ENCODE measurements at regions of chr11 and their contacts with region 1.

Region 1: DNA sequence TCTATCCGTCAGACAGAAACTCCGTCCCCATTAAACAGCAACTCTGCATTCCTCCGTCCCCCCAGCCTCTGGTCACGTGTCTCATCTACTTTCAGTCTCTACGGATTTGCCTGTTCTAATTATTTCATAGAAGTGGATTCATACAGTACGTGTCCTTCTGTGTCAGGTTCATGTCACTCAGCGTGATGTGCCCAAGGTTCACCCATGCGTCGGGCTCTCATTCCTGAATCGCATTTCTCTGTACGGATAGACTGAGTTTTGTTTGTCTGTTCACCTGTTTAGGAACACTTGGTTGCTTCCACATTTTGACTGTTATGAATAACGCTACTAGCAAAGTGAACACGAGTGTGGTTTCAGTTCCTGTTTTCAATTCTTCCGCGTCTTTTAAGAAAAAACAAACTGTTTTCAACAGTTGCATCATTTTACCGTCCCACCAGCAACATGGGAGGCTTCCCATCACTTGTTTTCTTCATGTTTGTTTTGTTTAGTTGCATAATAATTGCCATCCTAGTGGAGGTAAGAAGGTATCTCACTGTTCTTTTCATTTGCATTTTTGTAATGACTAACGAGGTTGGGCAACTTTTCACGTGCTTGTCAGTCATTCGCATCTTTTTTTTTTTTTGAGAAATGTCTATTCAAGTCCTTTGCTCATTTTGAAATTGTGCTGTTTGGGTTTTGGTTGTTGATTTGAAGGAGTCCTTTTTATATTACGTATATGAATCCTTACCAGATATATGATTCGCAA is 8.9 kb upstream of the NLRP6 start:
- DNase-seq: peak; percentile 81
- H3K4me3 Mint-ChIP-seq: peak overlapping the region; percentile 86
- H3K27ac Mint-ChIP-seq: peak overlapping the region; percentile 96
- H3K4me1 Mint-ChIP-seq: peaks cover 36% of the 10 kb centered on the region
- H3K27me3 Mint-ChIP-seq: no peaks in the 10 kb centered on the region

Region 2: GRCh38 chr11:207208-207862 is 62.0 kb before region 1 on chr11 and contains the starts of genes BET1L and RIC8A:
- CTCF ChIA-PET with region 1: interaction called, 4 read pairs
- POLR2A ChIA-PET with region 1: interaction called, 5 read pairs
- intact Hi-C with region 1: loop called (anchors 1 kb)
- DNase-seq: peak; percentile 98
- H3K4me3 Mint-ChIP-seq: peak within 1 kb of the TSS; percentile 97
- H3K27ac Mint-ChIP-seq: peak within 1 kb of the TSS; percentile 99
- H3K4me1 Mint-ChIP-seq: peaks cover 55% of the 10 kb centered on the region
- H3K27me3 Mint-ChIP-seq: no peaks in the 10 kb centered on the region
- total RNA-seq, gene BET1L: 51.0 to 53.2 TPM
- total RNA-seq, gene RIC8A: 100 to 104 TPM

Region 3: DNA sequence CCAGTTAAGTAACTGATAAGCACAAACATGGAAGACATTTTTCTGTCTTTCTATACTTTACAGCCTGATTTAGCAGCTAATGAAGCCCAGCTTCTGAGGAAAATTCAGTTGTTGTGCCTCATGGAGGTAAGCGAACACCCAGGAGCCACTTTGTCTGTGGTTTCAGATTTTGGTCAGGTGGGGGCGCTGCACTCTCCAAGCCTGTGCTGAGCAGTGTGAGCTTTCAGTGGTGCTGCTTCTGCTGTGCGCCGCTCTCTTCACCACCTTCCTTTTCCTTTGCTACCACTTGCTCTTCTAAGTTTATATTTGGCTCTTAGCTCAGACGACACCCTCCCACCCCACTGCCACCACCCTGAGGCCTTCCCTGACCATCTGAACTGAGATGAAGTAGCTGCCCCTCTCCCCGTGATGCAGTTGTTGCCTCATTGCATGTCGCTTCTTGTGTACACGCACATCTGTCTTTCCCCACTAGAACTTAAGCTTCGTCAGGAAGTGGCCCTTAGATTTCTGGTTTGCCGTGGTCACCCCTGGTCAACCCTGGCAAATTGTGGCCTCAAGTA is 18.5 kb before region 1 on chr11:
- CTCF ChIA-PET with region 1: interaction called, 24 read pairs
- POLR2A ChIA-PET with region 1: interaction called, 3 read pairs
- intact Hi-C with region 1: no loop called
- DNase-seq: peak; percentile 89
- H3K4me3 Mint-ChIP-seq: no peak overlapping the region
- H3K27ac Mint-ChIP-seq: peak overlapping the region; percentile 64
- H3K4me1 Mint-ChIP-seq: peaks cover 21% of the 10 kb centered on the region
- H3K27me3 Mint-ChIP-seq: no peaks in the 10 kb centered on the region

Region 4: DNA sequence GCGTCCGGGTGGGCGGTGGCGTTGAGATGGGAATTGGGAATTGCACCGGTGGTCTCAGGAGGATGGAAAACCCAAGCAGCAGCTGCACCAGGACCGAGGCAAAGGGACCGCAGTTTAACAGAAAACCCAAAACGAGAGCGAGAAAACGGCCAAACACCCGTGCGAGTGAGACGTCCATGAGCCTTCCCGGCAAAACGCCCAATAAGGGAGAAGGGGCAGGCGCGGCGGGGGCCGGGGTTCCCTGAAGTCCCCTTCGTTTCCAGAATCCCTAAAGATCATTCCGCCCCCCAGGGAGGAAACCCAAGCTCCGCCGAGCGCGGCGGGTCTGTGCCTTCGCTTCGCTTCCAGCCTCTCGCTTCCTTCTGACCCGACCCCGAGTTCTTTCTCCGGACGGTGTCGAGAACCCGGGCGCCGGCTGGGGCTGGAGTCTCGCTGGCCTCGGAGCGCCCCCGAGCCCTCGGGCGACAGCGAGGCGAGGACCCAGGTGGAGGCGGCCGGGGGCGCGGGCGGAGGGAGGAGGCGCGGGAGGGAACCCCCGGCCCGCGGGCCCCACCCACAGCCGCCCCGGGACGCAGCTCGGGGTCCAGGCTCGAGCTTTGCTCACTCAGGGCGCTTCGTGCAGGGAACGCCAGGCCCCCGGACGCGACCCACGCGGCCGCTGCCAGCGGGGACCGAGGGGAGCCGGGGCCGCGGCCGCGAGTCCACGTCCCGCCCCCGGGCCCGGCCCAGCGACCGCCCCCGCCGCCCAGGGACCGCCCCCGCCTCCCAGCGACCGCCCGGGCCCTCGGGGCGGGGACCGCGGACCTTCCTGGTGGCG is 19.2 kb after region 1 on chr11 and contains the start of gene PGGHG:
- CTCF ChIA-PET with region 1: interaction called, 3 read pairs
- POLR2A ChIA-PET with region 1: interaction called, 9 read pairs
- intact Hi-C with region 1: loop called (anchors 2 kb)
- DNase-seq: peak; percentile 61
- H3K4me3 Mint-ChIP-seq: peak within 1 kb of the TSS; percentile 96
- H3K27ac Mint-ChIP-seq: peak within 1 kb of the TSS; percentile 95
- H3K4me1 Mint-ChIP-seq: peaks cover 27% of the 10 kb centered on the region
- H3K27me3 Mint-ChIP-seq: no peaks in the 10 kb centered on the region
- total RNA-seq, gene PGGHG: 74.3 to 75.0 TPM

Region 5: DNA sequence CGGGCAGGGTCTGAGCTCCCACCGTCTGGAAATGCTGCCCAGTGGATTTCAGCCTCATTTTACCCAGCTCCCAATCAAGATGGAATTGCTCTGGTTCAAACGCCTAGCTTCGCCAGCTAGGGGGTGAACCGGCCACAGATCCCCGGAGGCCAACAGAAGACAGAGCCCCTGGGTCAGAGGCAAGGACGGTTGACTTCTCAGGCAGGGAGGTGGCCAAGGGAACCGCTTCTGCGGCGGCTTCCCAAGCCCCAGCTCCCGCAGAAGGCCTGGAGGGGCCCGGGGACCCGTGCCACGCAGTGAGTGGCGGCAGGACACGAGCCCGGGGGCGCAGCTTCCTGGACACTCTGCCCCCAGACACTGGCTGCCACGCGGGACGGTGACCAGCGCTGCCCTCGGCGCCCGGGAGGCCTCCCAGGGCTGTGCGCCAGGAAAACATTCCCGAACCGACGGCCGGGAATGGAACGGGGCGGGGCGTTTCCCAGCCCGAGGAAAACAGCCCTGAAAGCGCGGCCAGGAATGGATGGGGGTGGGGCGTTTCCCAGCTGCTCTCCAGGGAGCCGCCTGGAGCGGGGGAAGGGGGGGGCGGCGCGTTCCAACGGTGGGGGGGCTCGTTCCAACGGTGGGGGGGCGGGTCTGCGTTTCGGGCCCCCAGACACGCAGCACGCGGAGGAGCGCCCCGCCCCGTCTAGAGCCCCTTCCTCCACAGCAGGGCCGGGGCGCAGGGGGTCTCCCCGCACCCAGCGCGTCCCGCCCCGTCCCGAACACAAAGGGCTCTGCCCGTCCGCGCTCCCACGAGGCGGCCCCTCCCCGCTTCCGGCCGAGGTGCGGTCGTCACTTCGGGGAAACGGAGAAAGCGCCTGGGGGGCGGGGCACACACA is 86.5 kb after region 1 on chr11:
- CTCF ChIA-PET with region 1: interaction called, 3 read pairs
- POLR2A ChIA-PET with region 1: interaction called, 4 read pairs
- intact Hi-C with region 1: loop called (anchors 1 kb)
- DNase-seq: peak; percentile 92
- H3K4me3 Mint-ChIP-seq: no peak overlapping the region
- H3K27ac Mint-ChIP-seq: no peak overlapping the region
- H3K4me1 Mint-ChIP-seq: peaks cover 32% of the 10 kb centered on the region
- H3K27me3 Mint-ChIP-seq: no peaks in the 10 kb centered on the region

Region 6: GRCh38 chr11:506238-506994 is 237.1 kb after region 1 on chr11:
- CTCF ChIA-PET with region 1: no interaction called
- POLR2A ChIA-PET with region 1: no interaction called
- intact Hi-C with region 1: loop called (anchors 1 kb)
- DNase-seq: peak; percentile 98
- H3K4me3 Mint-ChIP-seq: peak overlapping the region; percentile 97
- H3K27ac Mint-ChIP-seq: peak overlapping the region; percentile 100
- H3K4me1 Mint-ChIP-seq: peaks cover 27% of the 10 kb centered on the region
- H3K27me3 Mint-ChIP-seq: no peaks in the 10 kb centered on the region